Cardiac septum (tissue), 1 donor: ENCODE measurements at regions of chr1 and their contacts with region 1.

Region 1: GRCh38 chr1:20229171-20229570 is 42.9 kb upstream of the PLA2G2C start:
- DNase-seq: no peak

Region 2: GRCh38 chr1:20430355-20431175 is 201.4 kb after region 1 on chr1:
- intact Hi-C with region 1: loop called (anchors 5 kb)
- DNase-seq: no peak